Heart left ventricle (tissue), 16 donors: ENCODE measurements at regions of chr13 and their contacts with region 1.

Region 1: GRCh38 chr13:20019043-20019442 is 60.5 kb downstream of the ZMYM2 start:
- DNase-seq: no peak
- ATAC-seq: no peak
- H3K4me3 ChIP-seq: no peak overlapping the region
- H3K27ac ChIP-seq: no peak overlapping the region
- H3K4me1 ChIP-seq: peaks cover 0 to 11% (median 0%) of the 10 kb centered on the region in 12 donors
- H3K27me3 ChIP-seq: no peaks in the 10 kb centered on the region
- CTCF ChIP-seq: no peak
- POLR2A ChIP-seq: no peak

Region 2: DNA sequence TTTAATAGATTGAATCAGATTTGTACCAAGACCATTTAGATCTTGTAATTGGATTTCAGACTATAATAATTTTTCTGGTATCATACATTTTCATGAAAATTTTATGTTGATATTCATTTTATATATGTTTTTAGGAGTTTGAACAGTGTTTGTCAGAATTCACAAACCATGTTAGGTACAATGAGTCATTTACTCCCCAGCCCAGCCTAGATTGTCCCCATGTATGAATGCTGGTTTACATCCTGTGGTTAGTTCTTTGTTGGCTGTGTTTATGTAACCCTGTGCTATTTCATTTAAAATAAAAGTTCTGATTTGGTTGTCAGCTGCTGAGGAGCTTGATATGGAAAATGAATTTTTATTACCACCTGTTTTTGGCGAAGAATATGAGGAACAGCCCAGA is 45.1 kb after region 1 on chr13:
- intact Hi-C with region 1: loop called in 1 of 10 experiments (anchors 10 kb)
- DNase-seq: no peak
- ATAC-seq: no peak
- H3K4me3 ChIP-seq: no peak overlapping the region
- H3K27ac ChIP-seq: no peak overlapping the region
- H3K4me1 ChIP-seq: no peaks in the 10 kb centered on the region
- H3K27me3 ChIP-seq: no peaks in the 10 kb centered on the region
- CTCF ChIP-seq: no peak
- POLR2A ChIP-seq: no peak

Region 3: DNA sequence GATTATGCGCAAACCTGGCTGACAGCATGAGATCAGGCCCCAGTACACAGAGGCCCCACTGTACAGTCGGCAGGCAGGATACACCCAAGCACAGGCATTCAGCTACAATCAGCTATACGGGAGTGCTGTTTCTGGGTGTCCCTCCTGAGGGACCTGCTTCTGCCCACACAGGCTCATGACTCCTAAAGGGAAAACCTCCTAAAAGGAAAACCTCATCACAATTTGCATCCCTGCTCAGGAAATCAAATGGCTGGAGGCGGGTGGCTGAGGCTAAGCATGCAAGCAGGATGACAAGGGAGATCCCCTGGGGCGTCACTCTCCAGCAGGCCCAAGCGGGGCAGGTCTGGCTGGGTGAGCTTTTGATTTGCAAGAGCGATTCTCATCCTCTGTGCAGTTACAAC is 406.8 kb after region 1 on chr13:
- intact Hi-C with region 1: no loop called
- DNase-seq: no peak
- ATAC-seq: no peak
- H3K4me3 ChIP-seq: no peak overlapping the region
- H3K27ac ChIP-seq: no peak overlapping the region
- H3K4me1 ChIP-seq: peaks cover 0 to 20% (median 5%) of the 10 kb centered on the region in 12 donors
- H3K27me3 ChIP-seq: no peaks in the 10 kb centered on the region
- CTCF ChIP-seq: no peak
- POLR2A ChIP-seq: no peak

Region 4: GRCh38 chr13:21348488-21349120 is 1329.6 kb after region 1 on chr13:
- intact Hi-C with region 1: no loop called
- DNase-seq: no peak
- ATAC-seq: peak in 1 of 4 donors; percentile 11
- H3K4me3 ChIP-seq: no peak overlapping the region
- H3K27ac ChIP-seq: no peak overlapping the region
- H3K4me1 ChIP-seq: peaks cover 0 to 14% (median 0%) of the 10 kb centered on the region in 12 donors
- H3K27me3 ChIP-seq: no peaks in the 10 kb centered on the region
- CTCF ChIP-seq: no peak
- POLR2A ChIP-seq: no peak